Right cardiac atrium (tissue), 5 donors: ENCODE measurements at regions of chr9 and their contacts with region 1.

Region 1: GRCh38 chr9:76216161-76216649 is 178.0 kb downstream of the RFK start:
- DNase-seq: no peak
- ATAC-seq: peak in 1 of 2 donors; percentile 39
- H3K4me3 ChIP-seq: no peak overlapping the region
- H3K27ac ChIP-seq: no peak overlapping the region
- H3K4me1 ChIP-seq: no peaks in the 10 kb centered on the region
- H3K27me3 ChIP-seq: no peaks in the 10 kb centered on the region

Region 2: DNA sequence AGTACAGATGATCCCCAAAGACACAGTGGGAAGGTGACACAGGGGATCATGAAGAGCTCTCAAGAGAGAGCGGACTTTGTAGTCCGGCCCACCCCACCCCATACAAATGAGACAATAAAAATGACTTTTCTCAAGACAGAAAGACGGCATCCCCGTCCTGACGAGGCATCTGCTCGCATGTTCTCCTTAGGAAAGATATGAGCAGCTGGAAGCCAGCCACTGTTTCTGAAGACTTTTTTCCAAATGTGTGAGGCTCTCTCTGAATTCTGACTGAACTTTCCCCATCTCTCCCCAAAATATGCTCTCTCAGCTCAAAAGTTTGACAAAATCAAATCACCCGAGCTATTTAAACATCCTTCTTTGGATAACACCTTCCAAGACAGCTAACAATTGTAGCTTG is 72.8 kb after region 1 on chr9:
- intact Hi-C with region 1: loop called in 1 of 4 experiments (anchors 10 kb)
- DNase-seq: peak in 2 of 3 donors; percentile 18 to 57
- ATAC-seq: no peak
- H3K4me3 ChIP-seq: no peak overlapping the region
- H3K27ac ChIP-seq: no peak overlapping the region
- H3K4me1 ChIP-seq: no peaks in the 10 kb centered on the region
- H3K27me3 ChIP-seq: no peaks in the 10 kb centered on the region